HAP-1 (cell line): ENCODE measurements at regions of chrX and their contacts with region 1.

Region 1: GRCh38 chrX:43557792-43558191 is 98.3 kb upstream of the MAOA start:
- DNase-seq: peak; percentile 54 to 79
- H3K4me3 ChIP-seq: no peak overlapping the region
- H3K4me1 ChIP-seq: no peaks in the 10 kb centered on the region; the same call in 1 of the 2 replicates
- H3K27me3 ChIP-seq: no peaks in the 10 kb centered on the region

Region 2: GRCh38 chrX:41781502-41781901 is 1776.3 kb before region 1 on chrX:
- in situ Hi-C with region 1: loop called (anchors 25 kb)
- DNase-seq: peak; percentile 32 to 72
- H3K4me3 ChIP-seq: no peak overlapping the region
- H3K4me1 ChIP-seq: peaks cover 9% of the 10 kb centered on the region
- H3K27me3 ChIP-seq: no peaks in the 10 kb centered on the region

Region 3: DNA sequence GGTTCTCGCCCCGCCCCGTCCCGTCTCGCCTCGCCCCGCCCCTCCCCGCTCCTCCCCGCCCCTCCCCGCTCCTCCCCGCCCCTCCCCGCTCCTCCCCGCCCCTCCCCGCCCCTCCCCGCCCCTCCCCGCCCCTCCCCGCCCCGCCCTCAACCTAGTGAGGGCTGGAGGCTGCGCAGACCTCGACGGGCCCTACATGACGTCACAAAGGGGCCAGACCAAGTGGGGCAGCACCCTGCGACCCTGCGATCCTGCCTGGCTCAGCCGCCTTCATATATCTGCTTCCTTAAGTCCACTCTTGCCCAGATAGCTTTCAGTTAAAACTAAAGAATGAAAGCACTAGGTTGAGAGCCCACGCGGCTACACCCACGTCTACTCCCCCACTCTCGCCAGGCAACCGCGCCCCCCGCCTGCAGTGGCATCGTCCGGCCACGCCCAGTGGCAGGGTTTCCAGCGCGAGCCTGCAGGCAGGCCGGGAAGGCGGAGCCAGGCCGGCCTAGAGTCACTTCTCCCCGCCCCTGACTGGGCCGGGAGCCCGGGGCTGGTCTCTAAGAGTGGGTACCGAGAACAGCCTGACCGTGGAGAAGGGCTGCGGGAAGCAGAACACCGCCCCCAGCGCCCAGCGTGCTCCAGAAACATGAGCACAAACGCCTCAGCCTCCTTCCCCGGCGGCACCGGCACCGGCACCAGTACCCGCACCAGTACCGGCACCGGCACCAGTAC is 96.8 kb after region 1 on chrX:
- in situ Hi-C with region 1: loop called (anchors 10 kb)
- DNase-seq: peak; percentile 92 to 96
- H3K4me3 ChIP-seq: peak overlapping the region; percentile 59
- H3K4me1 ChIP-seq: peaks cover 6% of the 10 kb centered on the region
- H3K27me3 ChIP-seq: no peaks in the 10 kb centered on the region

Region 4: GRCh38 chrX:43745938-43746721 is 188.3 kb after region 1 on chrX:
- in situ Hi-C with region 1: loop called (anchors 5 kb)
- DNase-seq: no peak
- H3K4me3 ChIP-seq: no peak overlapping the region
- H3K4me1 ChIP-seq: no peaks in the 10 kb centered on the region
- H3K27me3 ChIP-seq: no peaks in the 10 kb centered on the region